ENCODE measurements at regions of chr5 and their contacts with region 1.

Region 1: GRCh38 chr5:160418561-160419457 is at the start of gene SLU7:
- DNase-seq: peak; percentile 98
- H3K4me3 Mint-ChIP-seq: peak within 1 kb of the TSS; percentile 97
- H3K27ac Mint-ChIP-seq: peak within 1 kb of the TSS; percentile 97
- H3K4me1 Mint-ChIP-seq: peaks cover 61% of the 10 kb centered on the region
- H3K27me3 Mint-ChIP-seq: no peaks in the 10 kb centered on the region
- total RNA-seq, gene SLU7: 38.4 and 39.8 TPM in 2 replicates

Region 2: GRCh38 chr5:160008877-160009590 is 409.8 kb before region 1 on chr5 and contains the start of gene TTC1:
- intact Hi-C with region 1: loop called (anchors 1 kb)
- DNase-seq: peak; percentile 97
- H3K4me3 Mint-ChIP-seq: peak within 1 kb of the TSS; percentile 97
- H3K27ac Mint-ChIP-seq: peak within 1 kb of the TSS; percentile 99
- H3K4me1 Mint-ChIP-seq: peaks cover 25% of the 10 kb centered on the region
- H3K27me3 Mint-ChIP-seq: peaks cover 2% of the 10 kb centered on the region
- total RNA-seq, gene TTC1: 64.8 and 68.0 TPM in 2 replicates

Region 3: DNA sequence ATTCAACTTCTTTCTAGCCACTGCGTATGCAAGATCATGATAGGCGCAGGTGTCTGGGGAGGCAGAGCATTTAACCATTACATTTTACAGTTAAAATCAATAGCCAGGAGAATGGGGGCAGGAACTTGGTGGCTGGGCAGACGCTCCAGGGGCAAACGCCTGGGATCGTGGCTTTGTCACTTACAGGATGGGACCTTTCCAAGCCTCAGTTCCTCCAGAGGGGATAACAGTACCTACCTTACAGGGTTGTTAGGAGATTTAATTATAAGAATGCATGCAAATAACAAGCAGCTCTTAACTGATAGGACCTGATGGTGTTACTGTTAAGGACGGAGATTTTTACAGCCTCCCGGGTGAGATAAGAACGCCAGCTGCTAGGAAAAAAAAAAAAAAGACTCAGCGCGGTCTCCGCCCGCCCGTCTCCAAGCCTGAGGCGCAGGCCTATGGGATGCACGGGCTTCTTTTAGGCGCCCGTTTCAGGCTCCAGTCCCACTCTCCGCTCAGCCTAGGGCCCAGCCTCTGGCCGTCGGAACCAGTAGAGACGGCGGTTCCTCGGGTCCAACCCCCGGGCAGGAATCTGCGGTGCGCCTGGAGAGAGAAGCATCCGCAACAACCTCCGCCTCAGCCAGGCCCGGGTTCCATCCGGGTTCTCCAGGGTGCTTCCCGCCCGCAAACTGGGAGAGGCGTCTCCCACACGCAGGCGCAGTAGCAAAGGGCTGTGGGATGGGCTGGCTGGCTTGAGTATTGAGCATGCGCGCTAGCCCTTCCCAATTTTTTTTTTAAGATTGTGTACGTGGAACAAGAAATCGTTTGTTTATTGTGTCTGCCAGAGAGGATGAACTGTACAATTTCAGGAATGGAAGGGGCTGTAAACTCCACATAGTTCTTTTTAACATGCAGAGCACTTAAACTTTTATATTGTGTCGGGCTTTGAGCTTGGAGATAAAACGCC is 19.1 kb before region 1 on chr5 and contains the start of gene FAM200C:
- intact Hi-C with region 1: loop called (anchors 1 kb)
- DNase-seq: peak; percentile 94
- H3K4me3 Mint-ChIP-seq: peak within 1 kb of the TSS; percentile 94
- H3K27ac Mint-ChIP-seq: peak within 1 kb of the TSS; percentile 85
- H3K4me1 Mint-ChIP-seq: peaks cover 14% of the 10 kb centered on the region
- H3K27me3 Mint-ChIP-seq: peaks cover 2% of the 10 kb centered on the region
- total RNA-seq, gene FAM200C: 1.4 and 1.5 TPM in 2 replicates

Region 4: GRCh38 chr5:160665460-160665859 is 246.7 kb after region 1 on chr5:
- intact Hi-C with region 1: no loop called
- DNase-seq: no peak
- H3K4me3 Mint-ChIP-seq: no peak overlapping the region
- H3K27ac Mint-ChIP-seq: no peak overlapping the region
- H3K4me1 Mint-ChIP-seq: no peaks in the 10 kb centered on the region
- H3K27me3 Mint-ChIP-seq: peaks cover 3% of the 10 kb centered on the region